ENCODE measurements at regions of chr6 and their contacts with region 1.

Region 1: GRCh38 chr6:16019462-16019861 is 109.4 kb upstream of the MYLIP start:
- DNase-seq: no peak
- H3K4me3 ChIP-seq: no peak overlapping the region
- CTCF ChIP-seq: no peak

Region 2: DNA sequence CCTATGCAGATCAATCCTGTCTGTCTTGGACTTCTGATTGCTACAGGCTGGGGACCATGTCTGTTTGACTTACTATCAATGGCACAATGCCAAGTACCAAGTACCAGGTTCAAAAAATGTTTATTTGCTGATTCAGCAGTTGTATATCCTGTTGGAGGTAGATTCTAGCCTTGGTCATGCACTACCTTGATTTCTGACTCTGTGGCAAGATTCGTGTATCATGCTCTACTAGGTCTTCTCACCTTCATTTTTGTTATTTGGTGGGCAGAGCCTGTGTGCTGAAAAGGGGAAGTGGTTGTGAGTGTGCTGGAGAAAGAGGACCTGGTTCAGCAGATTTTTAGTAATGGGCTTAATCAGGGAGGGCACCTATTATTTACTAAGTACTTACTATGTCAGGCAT is 83.0 kb before region 1 on chr6:
- in situ Hi-C with region 1: loop called (anchors 5 kb)
- DNase-seq: no peak
- H3K4me3 ChIP-seq: no peak overlapping the region
- CTCF ChIP-seq: no peak